Activated T-helper 1 cell treated with anti-CD3 and anti-CD28 coated beads, Interleukin-12 subunit alpha, Interleukin-12 subunit beta, Interleukin-2, Interleukin-4 antibody, amounts not matched to agents 30 ng/mL and 10 ng/mL and 1 ng/mL, durations not matched to agents 14 hours and 24 hours and 36 hours (primary cell): ENCODE measurements at regions of chr18 and their contacts with region 1.

Region 1: GRCh38 chr18:42053188-42053781 is 98.3 kb downstream of the PIK3C3 start:
- DNase-seq: peak; percentile 34
- H3K4me3 Mint-ChIP-seq: no peak overlapping the region
- H3K27ac Mint-ChIP-seq: no peak overlapping the region
- H3K4me1 Mint-ChIP-seq: peaks cover 10% of the 10 kb centered on the region
- H3K27me3 Mint-ChIP-seq: no peaks in the 10 kb centered on the region

Region 2: DNA sequence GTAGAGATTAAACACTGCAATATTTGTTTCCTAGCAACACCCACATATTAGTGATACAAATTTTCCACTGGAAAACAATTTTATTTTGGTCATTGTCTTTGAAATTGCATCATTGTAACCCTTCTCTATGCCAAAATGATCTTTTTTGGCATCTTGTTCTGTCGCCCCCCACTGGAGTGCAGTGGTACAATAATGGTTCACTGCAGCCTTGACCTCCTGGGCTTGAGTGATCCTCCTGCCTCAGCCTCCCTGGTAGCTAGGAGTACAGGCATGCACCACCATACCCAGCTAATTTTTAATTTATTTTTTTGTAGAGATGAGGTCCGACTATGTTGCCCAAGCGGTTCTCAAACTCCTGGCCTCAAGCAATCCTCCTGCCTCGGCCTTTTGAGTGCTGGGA is 19.1 kb after region 1 on chr18:
- intact Hi-C with region 1: loop called (anchors 1 kb)
- DNase-seq: no peak
- H3K4me3 Mint-ChIP-seq: no peak overlapping the region
- H3K27ac Mint-ChIP-seq: no peak overlapping the region
- H3K4me1 Mint-ChIP-seq: peaks cover 7% of the 10 kb centered on the region
- H3K27me3 Mint-ChIP-seq: no peaks in the 10 kb centered on the region

Region 3: GRCh38 chr18:42114310-42114943 is 61.1 kb after region 1 on chr18:
- intact Hi-C with region 1: loop called (anchors 1 kb)
- DNase-seq: peak; percentile 38
- H3K4me3 Mint-ChIP-seq: no peak overlapping the region
- H3K27ac Mint-ChIP-seq: peak overlapping the region; percentile 49
- H3K4me1 Mint-ChIP-seq: peaks cover 15% of the 10 kb centered on the region
- H3K27me3 Mint-ChIP-seq: peaks cover 9% of the 10 kb centered on the region

Region 4: GRCh38 chr18:42255908-42256765 is 202.9 kb after region 1 on chr18:
- intact Hi-C with region 1: no loop called
- DNase-seq: no peak
- H3K4me3 Mint-ChIP-seq: no peak overlapping the region
- H3K27ac Mint-ChIP-seq: no peak overlapping the region
- H3K4me1 Mint-ChIP-seq: no peaks in the 10 kb centered on the region
- H3K27me3 Mint-ChIP-seq: peaks cover 2% of the 10 kb centered on the region

Region 5: DNA sequence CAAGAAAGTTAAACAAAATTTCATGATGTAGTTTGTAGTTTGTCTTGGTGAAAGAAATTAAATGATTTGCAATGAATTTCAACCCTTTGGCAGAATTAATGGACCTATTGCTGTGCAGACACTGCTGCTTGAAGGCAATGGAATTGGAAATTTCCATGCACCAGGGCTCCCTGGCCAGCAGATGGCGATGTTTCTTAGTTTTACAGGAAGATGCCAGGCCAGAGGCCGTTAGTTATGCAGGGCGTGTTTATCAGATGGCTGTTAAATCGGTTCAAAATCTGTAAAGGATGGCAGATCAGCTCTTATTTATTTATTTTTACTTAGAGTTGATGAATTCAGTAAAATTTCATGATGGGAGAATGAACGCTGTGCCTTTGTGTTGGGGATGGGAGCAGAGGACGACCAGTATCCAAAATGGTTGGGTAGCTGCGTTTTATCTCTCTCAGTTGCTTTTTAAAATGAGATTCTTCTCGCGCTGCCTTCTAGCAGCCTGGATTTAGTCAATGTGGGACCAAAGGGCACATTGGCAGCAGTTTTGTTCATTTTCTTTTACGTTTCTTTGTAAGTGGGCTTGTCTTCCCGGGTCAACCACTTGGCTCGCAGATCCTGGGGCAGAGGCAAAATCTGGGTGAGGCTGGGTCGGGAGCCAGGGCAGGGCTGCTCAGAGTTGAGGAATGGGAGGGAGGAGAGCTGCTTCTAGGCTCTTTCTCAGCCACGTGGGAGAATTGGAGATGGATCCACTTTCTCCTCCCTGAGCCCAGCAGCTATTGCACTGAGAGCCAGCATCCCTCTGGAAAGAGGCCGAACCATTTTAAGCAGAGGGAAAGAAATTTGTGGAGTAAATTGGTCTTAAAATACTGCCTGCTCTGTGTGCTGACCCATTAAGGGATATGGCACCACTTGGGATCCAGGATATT is 245.7 kb after region 1 on chr18:
- intact Hi-C with region 1: loop called (anchors 2 kb)
- DNase-seq: peak; percentile 13
- H3K4me3 Mint-ChIP-seq: no peak overlapping the region
- H3K27ac Mint-ChIP-seq: no peak overlapping the region
- H3K4me1 Mint-ChIP-seq: no peaks in the 10 kb centered on the region
- H3K27me3 Mint-ChIP-seq: no peaks in the 10 kb centered on the region

Region 6: DNA sequence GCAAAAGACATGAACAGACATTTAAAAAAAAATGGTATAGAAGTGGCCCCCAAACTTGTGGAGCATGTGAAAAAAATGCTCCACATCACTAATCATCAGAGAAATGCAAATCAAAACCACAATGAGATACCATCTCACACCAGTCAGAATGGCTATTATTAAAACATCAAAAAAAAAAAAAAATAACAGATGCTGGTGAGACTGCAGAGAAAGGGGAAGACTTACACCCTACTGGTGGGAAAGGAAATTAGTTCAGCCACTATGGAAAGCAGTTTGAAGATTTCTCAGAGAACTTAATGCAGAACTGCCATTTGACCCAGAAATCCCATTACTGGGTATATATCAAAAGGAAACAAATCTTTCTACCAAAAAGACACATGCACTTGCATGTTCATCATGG is 897.4 kb after region 1 on chr18:
- intact Hi-C with region 1: loop called (anchors 10 kb)
- DNase-seq: no peak
- H3K4me3 Mint-ChIP-seq: no peak overlapping the region
- H3K27ac Mint-ChIP-seq: no peak overlapping the region
- H3K4me1 Mint-ChIP-seq: no peaks in the 10 kb centered on the region
- H3K27me3 Mint-ChIP-seq: no peaks in the 10 kb centered on the region

Region 7: DNA sequence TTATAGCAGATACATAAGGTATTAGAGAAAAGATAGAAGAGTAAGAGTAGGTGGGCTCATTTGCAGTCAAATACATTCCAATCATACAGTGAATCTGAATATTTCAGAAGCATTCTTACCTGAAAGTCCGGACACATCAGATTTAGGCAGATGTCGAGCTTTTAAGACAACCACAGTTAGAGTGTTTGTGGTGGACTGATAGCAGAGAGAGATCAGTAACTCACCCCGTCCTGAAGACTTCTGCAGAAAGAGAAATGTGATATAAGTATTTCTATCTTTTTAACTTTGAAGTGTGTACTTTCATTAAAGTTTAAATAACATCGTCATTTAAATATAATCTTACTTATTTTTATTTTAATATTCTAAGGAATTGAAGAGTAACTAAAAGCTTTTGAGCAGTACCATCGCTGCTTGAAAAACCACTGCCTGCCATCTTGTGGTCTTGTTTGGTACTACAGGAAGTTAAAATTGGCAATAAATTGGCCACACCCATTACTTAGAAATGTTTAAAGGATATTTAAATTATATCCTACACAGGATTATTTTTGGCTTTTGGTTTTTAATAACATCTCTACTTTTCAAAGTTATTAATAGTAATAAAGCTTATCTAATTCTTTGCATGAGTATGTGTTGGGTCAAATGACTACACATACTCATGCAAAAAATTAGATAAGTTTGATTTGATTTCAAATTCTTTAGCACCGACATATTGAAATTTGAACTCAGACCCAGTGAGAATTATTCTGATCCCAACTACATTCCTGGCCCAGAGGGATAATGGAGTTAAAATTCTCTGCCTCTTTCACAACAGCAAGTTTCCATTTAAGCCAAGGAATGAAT is 1218.5 kb after region 1 on chr18:
- intact Hi-C with region 1: loop called (anchors 1 kb)
- DNase-seq: no peak
- H3K4me3 Mint-ChIP-seq: no peak overlapping the region
- H3K27ac Mint-ChIP-seq: no peak overlapping the region
- H3K4me1 Mint-ChIP-seq: no peaks in the 10 kb centered on the region
- H3K27me3 Mint-ChIP-seq: no peaks in the 10 kb centered on the region